ENCODE measurements at regions of chr7 and their contacts with region 1.

Region 1: DNA sequence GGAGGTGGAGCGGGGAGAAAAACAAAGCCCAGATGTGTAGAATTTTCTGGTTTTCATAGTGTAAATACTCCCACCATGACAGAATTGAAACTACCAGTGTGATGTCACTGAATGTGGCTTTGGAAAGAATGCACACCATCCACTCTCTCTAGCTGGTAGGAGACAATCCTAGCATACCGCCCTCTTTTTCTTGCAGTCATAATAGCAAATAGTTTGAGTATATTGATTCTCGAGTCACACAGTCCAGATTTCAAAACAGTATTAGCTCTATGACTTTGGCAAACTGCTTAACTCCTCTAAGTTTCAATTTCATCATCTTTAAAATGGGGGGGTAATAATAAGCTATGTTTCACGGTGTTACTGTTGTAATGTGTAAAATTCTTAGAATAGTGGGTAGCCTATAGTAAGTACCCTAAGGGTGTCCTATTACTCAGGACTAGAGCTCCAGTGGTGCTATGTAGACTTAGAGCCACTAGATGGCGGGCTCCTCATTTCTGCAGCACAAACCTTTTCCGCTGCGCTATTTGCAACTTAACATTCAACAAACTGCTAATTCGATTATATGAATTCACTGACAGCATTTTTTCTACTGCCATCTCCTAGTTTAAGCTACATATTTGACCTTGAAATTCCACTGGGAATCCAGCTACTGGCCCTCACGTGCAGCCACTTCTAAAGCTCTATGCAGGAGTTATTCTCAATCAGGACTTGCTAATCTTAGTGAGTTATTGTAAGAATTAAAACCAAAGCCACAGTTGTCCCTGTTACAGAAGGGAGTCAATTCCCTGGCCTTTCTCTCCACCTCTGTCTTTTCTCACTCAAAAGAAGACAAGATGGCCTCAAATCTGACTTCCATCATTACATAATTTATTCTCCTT is 18.7 kb downstream of the TAS2R40 start:
- DNase-seq: peak; percentile 59
- ATAC-seq: peak; percentile 91
- H3K4me3 ChIP-seq: no peak overlapping the region
- H3K27ac ChIP-seq: no peak overlapping the region
- H3K4me1 ChIP-seq: peaks cover 23% of the 10 kb centered on the region
- H3K27me3 ChIP-seq: no peaks in the 10 kb centered on the region
- CTCF ChIP-seq: peak; percentile 85
- EP300 ChIP-seq: no peak
- POLR2A ChIP-seq: no peak
- RAD21 ChIP-seq: peak; percentile 78

Region 2: GRCh38 chr7:142960955-142961512 is 279.5 kb before region 1 on chr7:
- CTCF ChIA-PET with region 1: no interaction called
- POLR2A ChIA-PET with region 1: no interaction called
- in situ Hi-C with region 1: no loop called
- intact Hi-C with region 1: no loop called
- DNase-seq: no peak
- ATAC-seq: no peak
- H3K4me3 ChIP-seq: no peak overlapping the region
- H3K27ac ChIP-seq: no peak overlapping the region
- H3K4me1 ChIP-seq: no peaks in the 10 kb centered on the region
- H3K27me3 ChIP-seq: peaks cover 0 to 3% of the 10 kb centered on the region in 2 experiments; a peak in 1 of 5 replicates
- CTCF ChIP-seq: no peak
- EP300 ChIP-seq: no peak
- POLR2A ChIP-seq: no peak
- RAD21 ChIP-seq: no peak

Region 3: DNA sequence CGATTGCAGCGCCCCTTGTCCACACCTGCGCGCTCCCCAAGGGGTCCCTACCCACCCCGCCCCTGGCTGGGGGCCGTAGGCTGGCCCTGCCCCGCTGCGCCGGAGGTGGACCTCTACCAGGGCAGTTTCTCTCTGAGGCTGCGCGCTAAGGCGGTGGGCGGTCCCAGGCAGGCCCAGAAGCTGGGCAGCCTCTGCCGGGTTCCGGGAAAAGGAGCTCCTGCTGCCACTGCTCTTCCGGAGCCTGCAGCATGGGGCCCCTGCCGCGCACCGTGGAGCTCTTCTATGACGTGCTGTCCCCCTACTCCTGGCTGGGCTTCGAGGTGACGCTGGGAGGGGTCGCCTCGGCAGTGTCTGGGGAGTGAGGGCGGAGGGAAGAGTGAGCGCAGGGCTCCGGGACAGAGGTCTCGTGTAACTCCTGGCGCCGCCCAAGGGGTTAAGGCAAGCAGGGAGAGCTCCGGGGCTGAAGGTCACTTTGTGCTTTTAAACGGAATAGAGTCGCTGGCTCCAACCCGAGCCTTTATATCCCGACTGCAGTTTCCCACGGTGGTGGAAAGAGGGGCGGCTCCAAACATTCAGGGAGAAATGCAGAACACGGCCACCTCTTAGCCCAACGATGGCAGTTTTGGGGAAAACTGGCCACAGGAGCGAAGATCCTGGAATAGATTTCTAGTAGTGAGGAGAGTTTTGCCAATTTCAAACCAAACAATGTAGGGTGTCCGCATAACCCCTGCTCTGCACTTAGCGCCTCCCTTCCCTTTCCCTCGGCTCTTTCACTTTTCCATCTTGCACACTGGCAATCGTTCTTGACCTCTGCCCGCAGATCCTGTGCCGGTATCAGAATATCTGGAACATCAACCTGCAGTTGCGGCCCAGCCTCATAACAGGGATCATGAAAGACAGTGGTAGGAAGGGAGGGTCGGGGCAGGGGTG is 23.0 kb after region 1 on chr7 and contains the start of gene GSTK1:
- CTCF ChIA-PET with region 1: no interaction called
- POLR2A ChIA-PET with region 1: interaction called, 16 read pairs
- in situ Hi-C with region 1: no loop called
- intact Hi-C with region 1: no loop called
- DNase-seq: peak; percentile 66
- ATAC-seq: peak; percentile 99
- H3K4me3 ChIP-seq: peak within 1 kb of the TSS; percentile 80 to 94 (median 94)
- H3K27ac ChIP-seq: peak within 1 kb of the TSS; percentile 92
- H3K4me1 ChIP-seq: peaks cover 41% of the 10 kb centered on the region
- H3K27me3 ChIP-seq: no peaks in the 10 kb centered on the region; a peak in 1 of 5 replicates
- CTCF ChIP-seq: peak; percentile 32
- EP300 ChIP-seq: peak in 1 of 2 experiments; percentile 22; a peak in 1 of 4 replicates
- POLR2A ChIP-seq: peak; percentile 88 to 98
- RAD21 ChIP-seq: peak; percentile 22
- total RNA-seq, gene GSTK1: 31.5 and 64.6 TPM in 2 replicates

Region 4: DNA sequence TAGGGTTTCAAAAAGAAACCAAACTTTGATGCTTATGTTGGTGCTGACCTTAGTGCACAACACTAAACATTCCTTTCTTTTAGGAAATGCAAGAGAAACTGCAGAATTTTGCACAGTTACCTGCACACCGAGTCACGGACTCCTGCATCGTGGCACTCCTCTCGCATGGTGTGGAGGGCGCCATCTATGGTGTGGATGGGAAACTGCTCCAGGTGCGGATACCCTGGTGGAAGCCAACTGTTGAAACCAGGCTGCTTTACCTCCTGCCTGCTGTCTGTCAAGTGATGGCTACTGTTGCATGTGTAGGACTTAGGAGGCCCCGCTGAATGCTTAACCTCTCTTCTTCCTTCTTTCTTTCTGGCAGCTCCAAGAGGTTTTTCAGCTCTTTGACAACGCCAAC is 59.3 kb after region 1 on chr7:
- CTCF ChIA-PET with region 1: interaction called, 35 read pairs
- POLR2A ChIA-PET with region 1: no interaction called
- in situ Hi-C with region 1: loop called (anchors 5 kb)
- intact Hi-C with region 1: loop called (anchors 1 kb)
- DNase-seq: peak; percentile 36
- ATAC-seq: peak; percentile 98
- H3K4me3 ChIP-seq: no peak overlapping the region
- H3K27ac ChIP-seq: no peak overlapping the region
- H3K4me1 ChIP-seq: no peaks in the 10 kb centered on the region
- H3K27me3 ChIP-seq: no peaks in the 10 kb centered on the region
- CTCF ChIP-seq: peak; percentile 73
- EP300 ChIP-seq: no peak
- POLR2A ChIP-seq: no peak
- RAD21 ChIP-seq: no peak

Region 5: DNA sequence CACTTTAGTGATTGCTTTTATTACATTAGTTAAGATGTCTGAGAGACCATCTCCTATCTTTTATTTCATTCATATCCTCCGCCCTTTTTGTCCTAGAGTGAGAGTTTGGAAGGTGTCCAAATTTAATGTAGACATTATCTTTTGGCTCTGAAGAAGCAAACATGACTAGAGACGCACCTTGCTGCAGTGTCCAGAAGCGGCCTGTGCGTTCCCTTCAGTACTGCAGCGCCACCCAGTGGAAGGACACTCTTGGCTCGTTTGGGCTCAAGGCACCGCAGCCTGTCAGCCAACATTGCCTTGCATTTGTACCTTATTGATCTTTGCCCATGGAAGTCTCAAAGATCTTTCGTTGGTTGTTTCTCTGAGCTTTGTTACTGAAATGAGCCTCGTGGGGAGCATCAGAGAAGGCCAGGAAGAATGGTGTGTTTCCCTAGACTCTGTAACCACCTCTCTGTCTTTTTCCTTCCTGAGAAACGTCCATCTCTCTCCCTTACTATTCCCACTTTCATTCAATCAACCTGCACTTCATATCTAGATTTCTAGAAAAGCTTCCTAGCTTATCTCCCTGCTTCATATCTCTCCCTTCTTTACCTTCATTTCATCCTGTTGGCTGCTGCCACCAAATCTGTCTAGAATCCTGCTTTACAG is 65.0 kb after region 1 on chr7:
- CTCF ChIA-PET with region 1: interaction called, 35 read pairs
- POLR2A ChIA-PET with region 1: no interaction called
- in situ Hi-C with region 1: loop called (anchors 5 kb)
- intact Hi-C with region 1: loop called (anchors 1 kb)
- DNase-seq: peak; percentile 44
- ATAC-seq: peak; percentile 97
- H3K4me3 ChIP-seq: no peak overlapping the region
- H3K27ac ChIP-seq: no peak overlapping the region
- H3K4me1 ChIP-seq: no peaks in the 10 kb centered on the region
- H3K27me3 ChIP-seq: no peaks in the 10 kb centered on the region
- CTCF ChIP-seq: peak; percentile 87
- EP300 ChIP-seq: no peak
- POLR2A ChIP-seq: no peak
- RAD21 ChIP-seq: peak; percentile 73

Region 6: DNA sequence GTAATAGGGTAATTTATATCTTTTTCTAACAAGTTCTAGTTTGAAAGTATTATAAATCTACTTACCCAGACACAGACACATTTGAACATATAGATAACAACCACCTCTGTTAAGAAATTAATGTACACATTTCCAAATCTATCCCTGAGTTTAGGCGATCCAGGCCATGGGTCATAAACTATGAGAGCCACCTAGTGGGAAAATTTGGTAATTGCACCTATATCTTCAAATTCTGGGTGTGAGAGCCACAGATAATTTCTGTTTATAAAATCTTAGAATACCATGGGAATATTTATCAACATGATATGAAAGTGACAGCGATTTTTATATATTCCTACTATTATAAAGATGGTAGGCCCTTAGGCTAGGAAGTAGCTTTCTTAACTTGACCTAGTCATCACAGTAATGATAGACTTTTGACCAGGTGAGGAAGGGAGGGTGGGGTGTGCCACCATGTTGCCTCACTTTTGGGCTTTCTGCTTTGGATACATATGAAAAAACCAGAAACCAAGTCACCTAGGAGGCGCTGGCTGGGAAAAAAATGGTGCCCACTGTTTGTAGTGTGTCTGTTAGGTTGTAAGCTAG is 176.1 kb after region 1 on chr7:
- CTCF ChIA-PET with region 1: interaction called, 7 read pairs
- POLR2A ChIA-PET with region 1: no interaction called
- in situ Hi-C with region 1: no loop called
- intact Hi-C with region 1: loop called (anchors 2 kb)
- DNase-seq: peak; percentile 48
- ATAC-seq: peak; percentile 74
- H3K4me3 ChIP-seq: no peak overlapping the region
- H3K27ac ChIP-seq: no peak overlapping the region
- H3K4me1 ChIP-seq: peaks cover 9% of the 10 kb centered on the region
- H3K27me3 ChIP-seq: peaks cover 2 to 14% of the 10 kb centered on the region in 2 experiments; a peak in 3 of 5 replicates
- CTCF ChIP-seq: peak; percentile 69
- EP300 ChIP-seq: no peak
- POLR2A ChIP-seq: no peak
- RAD21 ChIP-seq: peak; percentile 53; the same call in 1 of the 2 replicates

Measured in HepG2 (cell line).